ENCODE measurements at regions of chr9 and their contacts with region 1.

Region 1: DNA sequence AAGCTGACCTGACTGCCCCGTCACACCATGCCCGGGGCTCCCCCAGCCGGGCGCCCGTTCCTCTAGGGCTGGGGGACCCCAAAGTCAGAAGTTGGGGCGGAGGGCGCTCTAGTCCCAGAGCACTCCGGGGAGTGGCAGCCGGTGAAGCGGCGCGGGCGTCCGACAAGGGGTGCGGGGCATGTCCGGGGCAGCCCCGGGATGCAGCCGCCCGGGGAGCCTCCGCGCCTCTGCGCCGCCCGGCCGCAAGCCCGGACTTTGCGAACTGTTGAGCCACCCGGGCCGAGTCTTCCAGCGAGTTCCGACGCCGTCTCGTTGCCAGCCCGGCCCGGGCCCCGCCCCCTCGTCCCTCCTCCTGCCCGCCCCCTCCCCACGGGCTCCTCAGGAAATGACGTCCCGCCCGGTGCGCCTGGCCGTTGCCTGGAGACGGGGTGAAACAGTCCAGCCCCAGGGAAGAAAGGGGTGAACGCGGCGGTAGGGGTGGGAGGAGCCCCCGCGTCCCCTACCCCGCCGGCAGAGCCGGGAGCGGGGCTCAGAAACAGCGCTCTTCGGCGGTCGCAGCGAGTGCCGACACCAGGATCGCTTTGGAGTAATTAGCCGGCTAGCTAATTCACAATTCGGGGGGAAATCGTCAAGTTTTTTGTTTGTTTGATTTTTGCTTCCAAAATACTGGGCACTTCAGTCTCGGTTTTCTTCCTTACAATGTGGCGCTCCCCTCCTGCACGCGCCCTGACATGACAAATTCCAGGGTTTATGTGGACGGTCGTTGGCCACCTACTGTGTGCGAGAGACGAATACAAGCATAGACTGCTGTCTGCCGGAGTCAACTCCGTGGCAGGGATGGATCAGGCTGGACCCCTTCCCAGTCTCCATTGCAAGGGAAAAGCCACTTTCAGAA is at the start of gene WHRN:
- DNase-seq: peak; percentile 98
- H3K4me3 ChIP-seq: peak within 1 kb of the TSS; percentile 61 to 89 (median 68)
- H3K27ac ChIP-seq: peak within 1 kb of the TSS; percentile 87 to 90 (median 88)
- H3K4me1 ChIP-seq: peaks cover 11 to 56% (median 44%) of the 10 kb centered on the region in 4 donors
- H3K27me3 ChIP-seq: no peaks in the 10 kb centered on the region
- CTCF ChIP-seq: no peak
- EP300 ChIP-seq: no peak
- POLR2A ChIP-seq: no peak
- total RNA-seq, gene WHRN: 8.1 to 12.6 (median 10.7) TPM

Region 2: DNA sequence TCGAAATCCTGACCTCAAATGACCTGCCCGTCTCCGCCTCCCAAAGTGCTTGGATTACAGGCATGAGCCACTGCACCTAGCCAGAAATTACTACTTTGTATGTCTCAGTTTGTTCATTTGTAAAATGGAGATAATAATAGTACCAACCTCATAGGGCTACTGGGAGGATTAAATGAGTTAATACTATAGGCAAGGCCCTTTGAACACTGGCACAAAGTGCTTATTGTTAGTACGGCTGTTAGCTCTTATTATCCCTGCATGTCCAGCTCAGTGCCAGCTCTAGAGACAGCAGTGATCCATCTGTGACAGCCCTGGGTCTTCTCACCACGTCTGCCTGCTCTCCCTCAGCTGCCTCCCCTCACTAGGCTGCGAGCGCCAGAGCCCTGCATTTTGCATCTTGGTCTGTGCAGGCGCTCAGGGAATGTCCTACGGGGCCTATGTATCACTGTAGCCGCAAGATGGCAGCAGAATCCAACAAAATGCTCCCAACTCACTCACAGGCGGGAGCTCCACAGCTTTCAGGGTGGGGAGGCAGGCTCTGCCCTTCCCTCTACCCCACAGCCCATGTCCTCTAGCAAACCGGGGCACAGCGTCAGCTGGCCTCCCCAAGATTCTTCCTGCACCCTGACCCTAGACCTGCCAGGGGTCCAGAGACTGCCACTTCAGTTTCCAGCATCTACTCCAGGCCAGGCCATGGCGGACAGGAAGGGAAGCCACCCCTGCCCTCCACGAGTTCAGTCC is 100.0 kb before region 1 on chr9:
- intact Hi-C with region 1: loop called (anchors 5 kb)
- DNase-seq: no peak
- H3K4me3 ChIP-seq: no peak overlapping the region
- H3K27ac ChIP-seq: no peak overlapping the region
- H3K4me1 ChIP-seq: peaks cover 0 to 6% (median 0%) of the 10 kb centered on the region in 4 donors
- H3K27me3 ChIP-seq: no peaks in the 10 kb centered on the region
- CTCF ChIP-seq: peak; percentile 70 to 85 (median 74)
- EP300 ChIP-seq: no peak
- POLR2A ChIP-seq: no peak

Region 3: DNA sequence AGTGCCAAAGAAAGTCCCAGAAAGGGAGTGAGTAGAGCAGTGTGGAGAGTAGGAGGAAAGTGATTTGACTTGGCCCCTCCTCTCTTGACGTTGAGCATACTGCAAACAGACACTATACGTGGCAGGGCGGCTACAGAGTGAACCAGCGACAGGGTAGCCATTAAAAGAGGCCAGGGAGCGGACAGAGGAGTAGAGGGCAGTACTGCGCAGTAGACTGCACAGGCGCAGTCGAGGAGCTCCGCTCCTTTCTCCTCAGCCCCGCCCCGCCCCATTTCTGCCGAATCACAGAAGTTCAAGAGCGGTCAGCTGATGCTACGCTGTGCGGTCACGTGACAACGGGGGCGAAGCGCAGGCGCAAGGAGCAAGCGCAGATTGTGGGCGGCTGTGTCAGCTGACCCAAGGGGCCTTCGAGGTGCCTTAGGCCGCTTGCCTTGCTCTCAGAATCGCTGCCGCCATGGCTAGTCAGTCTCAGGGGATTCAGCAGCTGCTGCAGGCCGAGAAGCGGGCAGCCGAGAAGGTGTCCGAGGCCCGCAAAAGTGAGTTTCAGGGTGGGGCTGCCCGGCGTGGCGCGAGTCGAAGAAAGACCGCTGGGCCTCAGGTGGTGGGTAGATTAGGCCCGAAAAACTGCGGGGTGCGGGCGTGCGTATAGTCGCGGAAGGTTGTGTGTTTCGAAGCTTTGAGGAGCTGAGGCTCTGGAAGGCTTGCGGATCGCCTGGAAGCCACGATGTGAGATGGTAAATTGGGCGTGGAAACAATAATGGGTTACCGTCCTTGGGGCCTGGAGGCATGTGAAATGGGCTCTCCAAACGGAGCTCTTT is 82.2 kb after region 1 on chr9 and contains the start of gene ATP6V1G1:
- intact Hi-C with region 1: loop called (anchors 5 kb)
- DNase-seq: peak; percentile 100
- H3K4me3 ChIP-seq: peak within 1 kb of the TSS; percentile 73 to 94 (median 83)
- H3K27ac ChIP-seq: peak within 1 kb of the TSS; percentile 90 to 94 (median 94)
- H3K4me1 ChIP-seq: peaks cover 41 to 53% (median 52%) of the 10 kb centered on the region in 4 donors
- H3K27me3 ChIP-seq: no peaks in the 10 kb centered on the region
- CTCF ChIP-seq: peak in 1 of 3 experiments; percentile 13
- EP300 ChIP-seq: no peak
- POLR2A ChIP-seq: peak; percentile 76
- total RNA-seq, gene ATP6V1G1: 88.0 to 135 (median 113) TPM

Region 4: GRCh38 chr9:114611516-114612271 is 106.3 kb after region 1 on chr9:
- intact Hi-C with region 1: loop called (anchors 10 kb)
- DNase-seq: no peak
- H3K4me3 ChIP-seq: peak overlapping the region; percentile 61 to 86 (median 78)
- H3K27ac ChIP-seq: peak overlapping the region; percentile 86 to 95 (median 94)
- H3K4me1 ChIP-seq: peaks cover 11 to 53% (median 42%) of the 10 kb centered on the region in 4 donors
- H3K27me3 ChIP-seq: no peaks in the 10 kb centered on the region
- CTCF ChIP-seq: no peak
- EP300 ChIP-seq: no peak
- POLR2A ChIP-seq: no peak